ENCODE measurements at regions of chr20 and their contacts with region 1.

Region 1: GRCh38 chr20:1427457-1428054 is 34.7 kb upstream of the FKBP1A start:
- DNase-seq: peak; percentile 48
- H3K4me3 ChIP-seq: no peak overlapping the region
- H3K27ac ChIP-seq: peak overlapping the region in 1 of 2 experiments; percentile 81; a peak in 2 of 4 replicates
- H3K4me1 ChIP-seq: peaks cover 4 to 19% of the 10 kb centered on the region in 2 experiments; a peak in 3 of 4 replicates
- H3K27me3 ChIP-seq: no peaks in the 10 kb centered on the region
- CTCF ChIP-seq: no peak
- EP300 ChIP-seq: no peak
- RAD21 ChIP-seq: no peak

Region 2: DNA sequence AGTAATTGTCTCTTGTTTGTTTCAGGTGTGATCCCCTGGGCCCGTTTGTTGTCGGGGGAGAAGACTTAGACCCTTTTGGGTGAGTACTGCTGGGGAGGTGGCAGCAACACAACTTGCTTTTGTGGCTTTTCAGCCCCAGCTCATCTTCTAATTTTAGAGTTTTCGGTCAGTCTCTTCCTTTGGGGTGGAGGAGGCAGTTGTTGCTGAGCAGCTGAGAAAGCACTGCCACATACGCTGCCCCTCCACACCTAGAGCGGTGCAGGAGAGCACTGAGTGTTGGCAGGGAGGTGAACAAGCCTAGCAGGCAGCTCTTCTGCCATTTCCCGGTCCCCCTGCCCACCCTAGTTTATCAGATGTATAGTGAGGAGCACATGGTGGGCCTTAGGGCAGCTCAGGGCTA is 264.5 kb before region 1 on chr20:
- CTCF ChIA-PET with region 1: no interaction called
- POLR2A ChIA-PET with region 1: no interaction called
- DNase-seq: no peak
- H3K4me3 ChIP-seq: no peak overlapping the region
- H3K27ac ChIP-seq: no peak overlapping the region
- H3K4me1 ChIP-seq: no peaks in the 10 kb centered on the region
- H3K27me3 ChIP-seq: no peaks in the 10 kb centered on the region
- CTCF ChIP-seq: no peak
- EP300 ChIP-seq: no peak
- RAD21 ChIP-seq: no peak

Region 3: GRCh38 chr20:1392823-1393506 is 34.6 kb before region 1 on chr20 and contains the start of gene FKBP1A:
- CTCF ChIA-PET with region 1: interaction called, 11 read pairs
- POLR2A ChIA-PET with region 1: interaction called, 6 read pairs
- DNase-seq: peak; percentile 95
- H3K4me3 ChIP-seq: peak within 1 kb of the TSS; percentile 90 to 95
- H3K27ac ChIP-seq: peak within 1 kb of the TSS; percentile 75 to 83; a peak in 3 of 4 replicates
- H3K4me1 ChIP-seq: peaks cover 20 to 41% of the 10 kb centered on the region in 2 experiments; a peak in 3 of 4 replicates
- H3K27me3 ChIP-seq: no peaks in the 10 kb centered on the region
- CTCF ChIP-seq: no peak
- EP300 ChIP-seq: peak in 1 of 2 experiments; percentile 13; a peak in 1 of 4 replicates
- RAD21 ChIP-seq: peak; percentile 5; the same call in 1 of the 2 replicates
- polyA plus RNA-seq, gene FKBP1A: 362 and 453 TPM in 2 replicates

Region 4: DNA sequence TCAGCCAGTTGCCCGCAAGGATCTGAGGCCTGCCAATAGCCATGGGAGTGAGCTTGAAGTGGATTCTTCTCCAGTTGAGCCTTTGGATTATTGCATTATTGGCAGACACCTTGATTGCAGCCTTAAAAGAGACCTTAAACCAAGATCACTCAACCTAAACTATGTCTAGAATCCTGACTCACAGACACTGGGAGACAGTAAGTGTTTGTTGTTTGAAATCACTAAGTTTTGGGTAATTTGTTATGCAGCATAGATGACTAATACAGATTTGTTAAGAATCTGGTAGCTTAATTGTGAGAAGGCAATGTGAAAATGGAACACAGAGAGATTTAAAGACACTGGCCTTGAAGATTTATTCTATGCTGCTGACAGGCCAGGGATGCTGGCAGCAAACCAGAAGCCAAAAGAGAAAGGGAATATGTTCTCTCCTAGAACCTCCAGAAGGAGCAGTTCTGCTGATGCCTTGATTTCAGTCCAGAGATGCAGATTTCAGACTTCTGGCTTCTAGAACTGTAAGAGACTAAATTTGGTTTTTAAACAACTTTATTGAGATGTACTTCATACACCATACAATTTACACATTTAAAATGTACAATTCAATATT is 112.4 kb after region 1 on chr20:
- CTCF ChIA-PET with region 1: no interaction called
- POLR2A ChIA-PET with region 1: no interaction called
- DNase-seq: no peak
- H3K4me3 ChIP-seq: no peak overlapping the region
- H3K27ac ChIP-seq: no peak overlapping the region
- H3K4me1 ChIP-seq: no peaks in the 10 kb centered on the region
- H3K27me3 ChIP-seq: no peaks in the 10 kb centered on the region
- CTCF ChIP-seq: no peak
- EP300 ChIP-seq: no peak
- RAD21 ChIP-seq: no peak

Measured in SK-N-SH (cell line).